ENCODE measurements at regions of chr11 and their contacts with region 1.

Region 1: DNA sequence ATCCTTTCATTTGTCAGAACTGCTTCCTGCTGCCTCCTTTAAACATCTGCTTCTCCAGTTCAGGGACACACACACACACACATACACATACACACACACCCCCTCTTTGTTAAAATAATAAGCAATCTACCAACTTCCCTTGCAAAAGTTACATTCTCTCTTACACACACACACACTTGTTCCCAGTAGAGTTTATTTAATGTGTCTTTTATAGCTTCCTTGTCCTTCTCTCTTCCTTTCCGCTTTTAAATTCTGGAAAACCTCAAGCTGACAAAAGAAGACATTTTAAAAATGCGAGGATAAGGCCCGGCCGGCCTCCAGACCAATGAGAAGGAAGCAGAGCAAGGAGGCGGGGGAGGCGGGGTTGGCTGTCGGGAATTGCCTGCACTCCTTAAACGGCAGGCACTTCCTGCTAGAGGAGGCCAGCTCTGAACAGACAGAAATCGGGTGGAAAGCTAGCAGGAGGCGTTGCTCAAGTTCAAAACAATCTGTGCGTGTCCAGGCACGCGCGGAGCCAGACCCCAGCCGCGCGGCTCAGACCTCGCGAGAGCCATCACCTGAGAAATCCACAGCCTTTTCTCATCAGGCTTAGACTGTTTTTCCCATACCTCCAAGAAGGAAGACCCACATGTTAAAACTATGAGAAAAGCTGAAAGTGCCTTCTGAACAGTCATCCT is 99.9 kb downstream of the MAML2 start:
- DNase-seq: peak; percentile 99
- H3K4me3 ChIP-seq: peak overlapping the region; percentile 38
- H3K4me3 Mint-ChIP-seq: peak overlapping the region; percentile 74
- H3K27ac Mint-ChIP-seq: peak overlapping the region; percentile 88
- H3K4me1 ChIP-seq: peaks cover 38% of the 10 kb centered on the region
- H3K4me1 Mint-ChIP-seq: peaks cover 21% of the 10 kb centered on the region
- H3K27me3 ChIP-seq: no peaks in the 10 kb centered on the region
- H3K27me3 Mint-ChIP-seq: no peaks in the 10 kb centered on the region
- CTCF ChIP-seq: no peak

Region 2: GRCh38 chr11:95835768-95836488 is 407.2 kb before region 1 on chr11:
- CTCF ChIA-PET with region 1: interaction called, 6 read pairs
- POLR2A ChIA-PET with region 1: no interaction called
- intact Hi-C with region 1: loop called (anchors 1 kb)
- DNase-seq: peak; percentile 84 to 85
- H3K4me3 ChIP-seq: no peak overlapping the region
- H3K4me3 Mint-ChIP-seq: no peak overlapping the region
- H3K27ac Mint-ChIP-seq: no peak overlapping the region
- H3K4me1 ChIP-seq: no peaks in the 10 kb centered on the region; the same call in 1 of the 2 replicates
- H3K4me1 Mint-ChIP-seq: peaks cover 6% of the 10 kb centered on the region
- H3K27me3 ChIP-seq: no peaks in the 10 kb centered on the region
- H3K27me3 Mint-ChIP-seq: no peaks in the 10 kb centered on the region
- CTCF ChIP-seq: peak; percentile 97 to 98

Region 3: GRCh38 chr11:95923728-95924413 is 319.2 kb before region 1 on chr11 and contains the start of gene MTMR2:
- CTCF ChIA-PET with region 1: no interaction called
- POLR2A ChIA-PET with region 1: interaction called, 3 read pairs
- intact Hi-C with region 1: loop called (anchors 5 kb)
- DNase-seq: peak; percentile 88 to 91
- H3K4me3 ChIP-seq: peak within 1 kb of the TSS; percentile 84
- H3K4me3 Mint-ChIP-seq: peak within 1 kb of the TSS; percentile 88
- H3K27ac Mint-ChIP-seq: peak within 1 kb of the TSS; percentile 96
- H3K4me1 ChIP-seq: peaks cover 6% of the 10 kb centered on the region
- H3K4me1 Mint-ChIP-seq: peaks cover 13% of the 10 kb centered on the region
- H3K27me3 ChIP-seq: no peaks in the 10 kb centered on the region
- H3K27me3 Mint-ChIP-seq: no peaks in the 10 kb centered on the region
- CTCF ChIP-seq: peak in 1 of 2 experiments; percentile 14
- total RNA-seq, gene MTMR2: 75.2 and 76.4 TPM in 2 replicates

Region 4: DNA sequence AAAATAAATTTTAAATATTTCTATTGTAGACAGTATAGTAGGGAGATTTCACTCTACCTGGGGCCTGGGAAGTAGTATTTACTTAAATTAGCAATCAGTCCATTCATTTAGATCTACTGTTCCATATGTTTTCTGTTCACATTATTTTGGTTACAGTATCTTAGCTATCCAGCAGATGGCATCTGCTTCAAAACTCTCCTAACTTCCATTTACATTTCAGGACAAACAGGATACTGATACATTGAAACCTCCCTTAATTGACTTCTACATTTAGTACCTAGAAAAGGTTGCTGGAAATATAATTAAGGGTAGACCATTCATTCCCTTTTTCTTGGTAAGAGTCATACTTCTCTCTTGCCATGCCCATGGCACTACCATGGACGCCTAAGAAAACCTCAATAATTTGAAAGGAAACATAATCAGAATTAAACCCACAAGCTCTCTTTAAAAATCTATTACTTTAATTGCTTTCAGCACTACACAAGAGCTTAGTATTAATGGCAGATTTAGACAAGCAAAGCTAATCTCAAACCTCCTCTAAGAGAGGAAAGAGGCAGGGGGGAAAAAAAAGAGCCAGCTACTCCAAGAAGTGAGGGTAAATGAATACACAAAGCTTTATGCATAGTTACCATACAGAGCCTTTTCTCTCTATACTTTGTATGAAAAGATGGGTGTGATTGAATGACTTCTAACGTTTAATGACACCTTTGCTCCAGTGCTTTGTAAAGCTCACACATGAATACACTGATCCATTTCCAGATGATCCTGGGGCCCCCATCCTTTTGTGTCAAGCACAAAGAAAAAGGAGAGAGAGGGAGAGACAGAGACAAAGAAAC is 188.0 kb before region 1 on chr11:
- CTCF ChIA-PET with region 1: interaction called, 10 read pairs
- POLR2A ChIA-PET with region 1: no interaction called
- intact Hi-C with region 1: loop called (anchors 1 kb)
- DNase-seq: peak in 1 of 2 experiments; percentile 48
- H3K4me3 ChIP-seq: no peak overlapping the region
- H3K4me3 Mint-ChIP-seq: no peak overlapping the region
- H3K27ac Mint-ChIP-seq: no peak overlapping the region
- H3K4me1 ChIP-seq: peaks cover 44% of the 10 kb centered on the region
- H3K4me1 Mint-ChIP-seq: peaks cover 43% of the 10 kb centered on the region
- H3K27me3 ChIP-seq: no peaks in the 10 kb centered on the region
- H3K27me3 Mint-ChIP-seq: no peaks in the 10 kb centered on the region
- CTCF ChIP-seq: peak; percentile 77 to 81

Region 5: GRCh38 chr11:96149743-96150555 is 93.2 kb before region 1 on chr11:
- CTCF ChIA-PET with region 1: no interaction called
- POLR2A ChIA-PET with region 1: no interaction called
- intact Hi-C with region 1: loop called (anchors 1 kb)
- DNase-seq: no peak
- H3K4me3 ChIP-seq: no peak overlapping the region
- H3K4me3 Mint-ChIP-seq: no peak overlapping the region
- H3K27ac Mint-ChIP-seq: no peak overlapping the region
- H3K4me1 ChIP-seq: peaks cover 59% of the 10 kb centered on the region
- H3K4me1 Mint-ChIP-seq: peaks cover 35% of the 10 kb centered on the region
- H3K27me3 ChIP-seq: no peaks in the 10 kb centered on the region
- H3K27me3 Mint-ChIP-seq: no peaks in the 10 kb centered on the region
- CTCF ChIP-seq: no peak

Region 6: GRCh38 chr11:96272529-96273222 is 29.6 kb after region 1 on chr11:
- CTCF ChIA-PET with region 1: interaction called, 3 read pairs
- POLR2A ChIA-PET with region 1: no interaction called
- intact Hi-C with region 1: loop called (anchors 1 kb)
- DNase-seq: peak in 1 of 2 experiments; percentile 77
- H3K4me3 ChIP-seq: peak overlapping the region; percentile 4; the same call in 1 of the 2 replicates
- H3K4me3 Mint-ChIP-seq: peak overlapping the region; percentile 70
- H3K27ac Mint-ChIP-seq: peak overlapping the region; percentile 96
- H3K4me1 ChIP-seq: peaks cover 46% of the 10 kb centered on the region
- H3K4me1 Mint-ChIP-seq: peaks cover 37% of the 10 kb centered on the region
- H3K27me3 ChIP-seq: no peaks in the 10 kb centered on the region
- H3K27me3 Mint-ChIP-seq: no peaks in the 10 kb centered on the region
- CTCF ChIP-seq: no peak

Region 7: GRCh38 chr11:96389720-96390487 is 146.8 kb after region 1 on chr11 and contains the starts of genes CCDC82 and JRKL:
- CTCF ChIA-PET with region 1: interaction called, 3 read pairs
- POLR2A ChIA-PET with region 1: interaction called, 14 read pairs
- intact Hi-C with region 1: loop called (anchors 1 kb)
- DNase-seq: peak; percentile 99 to 100
- H3K4me3 ChIP-seq: peak within 1 kb of the TSS; percentile 82
- H3K4me3 Mint-ChIP-seq: peak within 1 kb of the TSS; percentile 82
- H3K27ac Mint-ChIP-seq: peak within 1 kb of the TSS; percentile 88
- H3K4me1 ChIP-seq: peaks cover 28% of the 10 kb centered on the region
- H3K4me1 Mint-ChIP-seq: peaks cover 19% of the 10 kb centered on the region
- H3K27me3 ChIP-seq: no peaks in the 10 kb centered on the region
- H3K27me3 Mint-ChIP-seq: no peaks in the 10 kb centered on the region
- CTCF ChIP-seq: no peak
- total RNA-seq, gene CCDC82: 38.2 TPM in 2 replicates
- total RNA-seq, gene JRKL: 16.6 and 17.4 TPM in 2 replicates